Activated CD4-positive, alpha-beta memory T cell treated with anti-CD3 and anti-CD28 coated beads for 36 hours (primary cell): ENCODE measurements at regions of chr9 and their contacts with region 1.

Region 1: GRCh38 chr9:131733541-131734061 is 6.3 kb downstream of the RAPGEF1 start:
- DNase-seq: peak; percentile 74
- H3K4me3 Mint-ChIP-seq: peak overlapping the region; percentile 62
- H3K27ac Mint-ChIP-seq: peak overlapping the region; percentile 93
- H3K4me1 Mint-ChIP-seq: peaks cover 86% of the 10 kb centered on the region
- H3K27me3 Mint-ChIP-seq: no peaks in the 10 kb centered on the region

Region 2: GRCh38 chr9:131270171-131271015 is 463.2 kb before region 1 on chr9:
- CTCF ChIA-PET with region 1: no interaction called
- POLR2A ChIA-PET with region 1: no interaction called
- intact Hi-C with region 1: loop called (anchors 5 kb)
- DNase-seq: peak; percentile 80
- H3K4me3 Mint-ChIP-seq: peak overlapping the region; percentile 99
- H3K27ac Mint-ChIP-seq: peak overlapping the region; percentile 97
- H3K4me1 Mint-ChIP-seq: peaks cover 56% of the 10 kb centered on the region
- H3K27me3 Mint-ChIP-seq: no peaks in the 10 kb centered on the region

Region 3: DNA sequence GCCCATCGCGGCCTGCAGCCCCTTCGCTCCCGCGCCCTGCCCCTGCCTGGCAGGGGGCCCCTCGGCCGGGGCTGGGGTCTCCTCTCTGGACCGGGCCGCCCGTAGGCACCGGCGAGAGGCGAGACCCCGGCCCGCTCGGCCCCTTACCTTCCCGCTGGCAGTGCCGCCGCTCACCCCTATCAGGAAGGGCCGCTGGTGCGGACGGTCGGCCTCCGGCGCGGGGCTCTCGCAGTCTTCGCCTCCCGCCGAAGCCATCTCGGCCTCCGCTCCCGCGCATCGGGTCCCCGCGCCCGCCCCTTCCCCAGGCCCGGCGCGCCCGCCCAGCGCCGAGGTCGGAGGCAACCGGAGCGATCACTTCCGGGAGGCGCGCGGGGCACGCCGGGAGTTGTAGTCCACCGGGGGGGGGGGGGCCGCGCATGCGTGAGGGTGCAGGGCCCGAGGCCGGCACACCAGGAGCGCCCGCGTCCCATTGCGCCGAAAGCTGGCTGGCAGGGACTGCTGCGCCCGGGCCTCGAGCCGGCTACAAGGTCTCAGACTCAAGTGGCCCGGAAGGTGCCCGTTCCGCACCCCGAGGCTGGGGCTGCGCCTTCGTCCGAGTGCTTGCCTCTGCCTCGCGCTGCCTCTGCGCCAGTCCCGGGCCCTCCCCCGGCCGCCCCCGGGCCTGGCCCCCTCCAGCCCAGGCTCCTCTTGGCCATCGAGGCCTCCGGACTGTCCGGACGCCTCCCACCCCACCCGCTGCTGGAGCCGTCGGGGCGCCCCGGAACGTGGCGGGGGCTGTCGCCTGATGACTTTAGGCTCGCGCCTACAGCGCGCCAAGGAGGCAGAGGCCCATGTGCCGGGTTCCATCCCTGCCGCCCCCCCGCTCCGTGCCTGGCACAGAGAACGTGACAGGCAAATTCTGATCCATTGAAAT is 202.4 kb before region 1 on chr9 and contains the start of gene UCK1:
- CTCF ChIA-PET with region 1: no interaction called
- POLR2A ChIA-PET with region 1: no interaction called
- intact Hi-C with region 1: no loop called
- DNase-seq: peak; percentile 79
- H3K4me3 Mint-ChIP-seq: peak within 1 kb of the TSS; percentile 81
- H3K27ac Mint-ChIP-seq: peak within 1 kb of the TSS; percentile 45
- H3K4me1 Mint-ChIP-seq: peaks cover 26% of the 10 kb centered on the region
- H3K27me3 Mint-ChIP-seq: no peaks in the 10 kb centered on the region
- total RNA-seq, gene UCK1: 15.7 to 18.6 TPM

Region 4: DNA sequence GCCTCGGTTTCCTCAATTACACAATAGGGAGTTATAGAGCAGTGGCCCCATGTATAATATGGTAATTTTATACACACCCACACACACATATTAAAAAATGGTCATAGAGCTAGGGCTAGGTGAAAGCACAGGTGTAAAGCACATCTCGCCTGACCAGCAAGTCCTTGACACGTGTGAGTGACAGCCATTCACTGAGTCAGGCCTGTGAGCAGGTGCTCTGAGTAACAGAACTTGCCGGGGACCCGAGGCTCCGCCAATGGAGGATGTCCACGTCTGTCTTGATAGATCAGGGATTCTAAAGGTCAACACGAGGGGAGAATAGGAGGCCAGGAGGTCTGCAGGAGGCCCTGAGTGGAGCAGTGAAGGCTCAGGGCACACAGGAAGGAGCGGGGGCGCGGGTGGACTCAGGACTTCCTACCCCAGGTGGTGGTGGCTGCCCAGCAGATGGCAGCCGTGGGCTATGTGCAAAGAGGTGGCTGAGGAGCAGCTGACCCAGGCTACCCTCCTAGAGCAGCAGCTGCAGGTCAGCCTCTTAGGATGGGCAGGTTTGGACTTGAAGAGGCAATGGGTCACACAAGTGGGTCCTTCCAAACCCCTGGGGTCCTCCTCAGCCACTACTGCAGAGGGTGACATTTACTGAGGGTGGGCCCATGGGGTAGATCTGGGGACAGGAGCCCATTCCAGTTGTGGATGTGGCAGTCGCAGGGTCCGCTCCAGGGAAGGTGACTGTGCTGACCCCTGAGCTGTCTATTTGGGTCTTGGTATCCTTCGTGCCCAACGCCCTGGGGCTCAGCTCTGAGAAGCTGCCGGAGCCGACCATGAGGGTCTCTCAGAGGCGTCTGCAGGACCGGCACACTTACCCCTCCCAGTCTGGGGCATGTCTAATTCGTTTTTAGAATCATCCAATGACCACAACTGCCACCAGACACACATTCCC is 142.4 kb before region 1 on chr9:
- CTCF ChIA-PET with region 1: interaction called, 65 read pairs
- POLR2A ChIA-PET with region 1: interaction called, 3 read pairs
- intact Hi-C with region 1: no loop called
- DNase-seq: peak; percentile 87
- H3K4me3 Mint-ChIP-seq: no peak overlapping the region
- H3K27ac Mint-ChIP-seq: peak overlapping the region; percentile 72
- H3K4me1 Mint-ChIP-seq: peaks cover 27% of the 10 kb centered on the region
- H3K27me3 Mint-ChIP-seq: no peaks in the 10 kb centered on the region

Region 5: DNA sequence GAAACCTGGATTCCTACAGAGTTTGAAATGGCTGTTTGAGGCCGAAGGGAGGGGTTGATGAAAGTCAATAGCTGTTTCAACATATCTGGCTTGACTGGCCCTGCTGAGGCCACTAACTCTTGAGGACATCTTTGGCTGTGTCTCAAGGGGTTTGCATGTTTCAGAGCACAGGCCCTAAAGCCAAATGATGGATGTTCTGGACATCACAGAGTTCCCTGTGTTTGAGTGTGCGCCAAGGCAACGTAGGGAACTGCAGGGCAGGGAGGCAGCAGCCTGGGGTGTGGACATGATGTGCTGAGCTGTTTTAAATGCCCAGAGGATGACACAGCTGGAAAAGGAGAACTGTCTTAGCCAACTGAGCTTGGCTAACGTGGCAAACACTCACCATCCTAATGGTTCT is 83.3 kb before region 1 on chr9:
- CTCF ChIA-PET with region 1: interaction called, 6 read pairs
- POLR2A ChIA-PET with region 1: interaction called, 20 read pairs
- intact Hi-C with region 1: loop called (anchors 1 kb)
- DNase-seq: no peak
- H3K4me3 Mint-ChIP-seq: no peak overlapping the region
- H3K27ac Mint-ChIP-seq: no peak overlapping the region
- H3K4me1 Mint-ChIP-seq: peaks cover 62% of the 10 kb centered on the region
- H3K27me3 Mint-ChIP-seq: no peaks in the 10 kb centered on the region

Region 6: GRCh38 chr9:131709771-131710454 is 23.7 kb before region 1 on chr9:
- CTCF ChIA-PET with region 1: interaction called, 10 read pairs
- POLR2A ChIA-PET with region 1: interaction called, 27 read pairs
- intact Hi-C with region 1: loop called (anchors 1 kb)
- DNase-seq: peak; percentile 73
- H3K4me3 Mint-ChIP-seq: peak overlapping the region; percentile 62
- H3K27ac Mint-ChIP-seq: peak overlapping the region; percentile 96
- H3K4me1 Mint-ChIP-seq: peaks cover 86% of the 10 kb centered on the region
- H3K27me3 Mint-ChIP-seq: no peaks in the 10 kb centered on the region

Region 7: DNA sequence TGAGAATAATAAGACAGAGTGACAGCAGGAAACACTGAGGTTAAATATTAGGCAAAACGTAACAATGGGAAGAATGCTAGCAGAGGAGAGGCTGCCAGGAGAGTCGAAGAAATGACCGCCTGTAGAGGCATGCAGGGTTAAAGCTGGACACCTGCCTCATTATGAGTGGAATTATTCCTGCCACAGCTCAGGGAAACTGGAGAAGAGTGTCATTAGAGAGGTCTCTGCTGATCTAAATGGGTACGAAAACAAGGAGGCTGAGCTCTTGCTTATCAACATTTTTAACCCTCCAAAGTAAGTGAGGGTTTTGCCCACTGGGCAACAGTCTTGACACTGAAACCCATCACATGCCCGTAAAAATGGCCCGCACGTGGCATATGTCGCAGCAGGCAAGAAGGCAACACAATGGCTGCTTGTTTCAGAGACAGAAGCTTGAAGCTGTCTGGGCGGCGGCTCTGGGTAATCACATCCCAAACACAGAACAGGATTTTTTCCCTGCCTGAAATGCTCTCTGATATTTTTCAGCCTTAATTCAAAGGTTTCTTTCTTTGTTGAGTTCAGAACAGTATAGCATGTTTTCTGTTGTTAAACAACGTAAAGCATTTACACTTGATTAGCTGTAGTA is 227.4 kb after region 1 on chr9:
- CTCF ChIA-PET with region 1: no interaction called
- POLR2A ChIA-PET with region 1: no interaction called
- intact Hi-C with region 1: no loop called
- DNase-seq: no peak
- H3K4me3 Mint-ChIP-seq: no peak overlapping the region
- H3K27ac Mint-ChIP-seq: no peak overlapping the region
- H3K4me1 Mint-ChIP-seq: no peaks in the 10 kb centered on the region
- H3K27me3 Mint-ChIP-seq: no peaks in the 10 kb centered on the region